ENCODE measurements at regions of chr19 and their contacts with region 1.

Region 1: GRCh38 chr19:37370880-37371661 is at the start of gene ZNF527:
- DNase-seq: peak; percentile 96
- H3K4me3 Mint-ChIP-seq: peak within 1 kb of the TSS; percentile 99
- H3K27ac Mint-ChIP-seq: peak within 1 kb of the TSS; percentile 87
- H3K4me1 Mint-ChIP-seq: peaks cover 13% of the 10 kb centered on the region
- H3K27me3 Mint-ChIP-seq: no peaks in the 10 kb centered on the region
- total RNA-seq, gene ZNF527: 3.9 and 4.5 TPM in 2 replicates

Region 2: DNA sequence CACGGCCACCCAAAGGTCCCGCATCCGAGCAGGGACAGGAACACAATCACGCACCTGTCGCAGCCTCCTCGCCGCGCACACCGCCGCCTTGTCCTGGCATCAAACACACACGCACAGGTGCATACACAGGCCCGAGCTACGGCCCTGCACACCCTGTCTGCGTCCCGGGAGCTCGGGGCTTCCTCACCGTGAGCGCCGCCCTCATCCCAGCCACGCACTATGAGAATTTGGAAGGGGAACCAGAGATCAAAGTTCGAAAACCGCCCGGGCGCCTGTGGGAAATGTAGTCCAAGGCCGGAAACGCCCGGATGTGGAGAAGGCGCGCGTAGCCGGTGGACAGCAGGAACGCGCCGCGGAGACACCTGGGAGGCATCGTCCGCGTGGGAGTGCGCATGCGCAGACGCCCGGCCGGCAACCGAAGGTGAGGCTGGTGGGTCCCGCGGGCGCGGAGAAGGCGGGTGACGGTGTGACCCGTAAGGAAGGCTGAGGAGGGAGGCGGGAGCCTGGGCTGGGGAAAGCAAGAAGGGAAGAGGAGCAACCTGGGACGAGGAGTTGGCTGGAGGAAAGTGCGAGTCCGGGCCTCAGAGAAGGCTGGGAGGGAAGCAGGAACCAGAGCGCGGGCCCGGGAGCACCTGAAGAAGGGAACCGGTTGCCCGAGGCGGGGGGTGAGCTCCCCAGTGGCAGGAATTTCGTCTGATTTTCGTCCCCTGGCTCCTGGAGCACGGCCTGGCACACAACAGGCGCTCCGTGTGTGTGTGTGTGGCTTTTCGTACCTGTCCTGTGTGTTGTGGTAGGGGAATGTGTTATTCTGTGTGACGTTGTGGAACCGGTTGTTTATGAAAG is 683.6 kb before region 1 on chr19 and contains the start of gene ZNF567:
- intact Hi-C with region 1: loop called (anchors 1 kb)
- DNase-seq: peak; percentile 97
- H3K4me3 Mint-ChIP-seq: peak within 1 kb of the TSS; percentile 95
- H3K27ac Mint-ChIP-seq: peak within 1 kb of the TSS; percentile 91
- H3K4me1 Mint-ChIP-seq: peaks cover 24% of the 10 kb centered on the region
- H3K27me3 Mint-ChIP-seq: peaks cover 2% of the 10 kb centered on the region
- total RNA-seq, gene ZNF567: 5.8 and 8.5 TPM in 2 replicates

Region 3: GRCh38 chr19:37172368-37173366 is 198.4 kb before region 1 on chr19 and contains the start of gene ZNF585A:
- intact Hi-C with region 1: loop called (anchors 2 kb)
- DNase-seq: peak; percentile 74
- H3K4me3 Mint-ChIP-seq: no peak within 1 kb of the TSS
- H3K27ac Mint-ChIP-seq: no peak within 1 kb of the TSS
- H3K4me1 Mint-ChIP-seq: no peaks in the 10 kb centered on the region
- H3K27me3 Mint-ChIP-seq: no peaks in the 10 kb centered on the region
- total RNA-seq, gene ZNF585A: 1.2 and 2.6 TPM in 2 replicates

Region 4: GRCh38 chr19:37334179-37335071 is 36.6 kb before region 1 on chr19:
- intact Hi-C with region 1: loop called (anchors 5 kb)
- DNase-seq: peak; percentile 56
- H3K4me3 Mint-ChIP-seq: peak overlapping the region; percentile 80
- H3K27ac Mint-ChIP-seq: peak overlapping the region; percentile 27
- H3K4me1 Mint-ChIP-seq: no peaks in the 10 kb centered on the region
- H3K27me3 Mint-ChIP-seq: no peaks in the 10 kb centered on the region

Region 5: DNA sequence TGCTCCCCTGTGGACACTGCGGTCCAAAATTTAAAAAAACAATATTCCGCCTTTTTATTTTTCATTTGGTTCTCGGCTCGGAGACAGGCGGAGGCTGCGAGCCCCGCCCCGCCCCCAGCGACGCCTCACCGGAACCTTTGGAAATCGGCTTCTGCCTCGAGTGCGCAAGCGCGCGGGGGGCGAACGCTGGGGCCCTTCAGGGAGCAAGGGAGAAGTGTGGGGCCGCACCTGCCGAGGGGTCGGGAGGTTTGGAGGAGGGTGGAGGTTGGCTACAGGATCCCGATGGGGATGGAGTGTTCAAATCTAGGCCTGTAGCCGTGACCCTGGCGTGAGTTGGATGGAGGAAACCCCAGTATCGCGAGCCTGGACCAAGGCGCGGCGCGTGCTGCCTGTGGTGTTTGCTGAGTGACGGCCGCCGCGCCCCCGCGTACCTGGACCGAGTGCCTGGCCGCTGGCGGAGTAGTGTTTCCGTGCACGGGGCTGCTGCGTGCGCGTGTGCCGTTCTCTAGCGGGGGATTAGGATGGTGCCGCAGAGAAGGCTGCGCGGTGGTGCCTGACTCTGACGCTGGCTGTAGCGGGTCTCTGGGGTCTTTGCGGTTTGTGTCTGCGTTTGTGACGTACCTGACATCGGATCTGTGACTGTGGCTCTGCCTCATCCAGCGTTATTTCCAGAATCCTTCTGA is 284.8 kb after region 1 on chr19:
- intact Hi-C with region 1: loop called (anchors 1 kb)
- DNase-seq: peak; percentile 83
- H3K4me3 Mint-ChIP-seq: peak overlapping the region; percentile 90
- H3K27ac Mint-ChIP-seq: peak overlapping the region; percentile 93
- H3K4me1 Mint-ChIP-seq: peaks cover 28% of the 10 kb centered on the region
- H3K27me3 Mint-ChIP-seq: no peaks in the 10 kb centered on the region

Measured in activated T-helper 1 cell treated with anti-CD3 and anti-CD28 coated beads, Interleukin-12 subunit alpha, Interleukin-12 subunit beta, Interleukin-2, Interleukin-4 antibody, amounts not matched to agents 30 ng/mL and 10 ng/mL and 1 ng/mL, durations not matched to agents 14 hours and 24 hours and 36 hours (primary cell).